ENCODE measurements at regions of chr11 and their contacts with region 1.

Region 1: DNA sequence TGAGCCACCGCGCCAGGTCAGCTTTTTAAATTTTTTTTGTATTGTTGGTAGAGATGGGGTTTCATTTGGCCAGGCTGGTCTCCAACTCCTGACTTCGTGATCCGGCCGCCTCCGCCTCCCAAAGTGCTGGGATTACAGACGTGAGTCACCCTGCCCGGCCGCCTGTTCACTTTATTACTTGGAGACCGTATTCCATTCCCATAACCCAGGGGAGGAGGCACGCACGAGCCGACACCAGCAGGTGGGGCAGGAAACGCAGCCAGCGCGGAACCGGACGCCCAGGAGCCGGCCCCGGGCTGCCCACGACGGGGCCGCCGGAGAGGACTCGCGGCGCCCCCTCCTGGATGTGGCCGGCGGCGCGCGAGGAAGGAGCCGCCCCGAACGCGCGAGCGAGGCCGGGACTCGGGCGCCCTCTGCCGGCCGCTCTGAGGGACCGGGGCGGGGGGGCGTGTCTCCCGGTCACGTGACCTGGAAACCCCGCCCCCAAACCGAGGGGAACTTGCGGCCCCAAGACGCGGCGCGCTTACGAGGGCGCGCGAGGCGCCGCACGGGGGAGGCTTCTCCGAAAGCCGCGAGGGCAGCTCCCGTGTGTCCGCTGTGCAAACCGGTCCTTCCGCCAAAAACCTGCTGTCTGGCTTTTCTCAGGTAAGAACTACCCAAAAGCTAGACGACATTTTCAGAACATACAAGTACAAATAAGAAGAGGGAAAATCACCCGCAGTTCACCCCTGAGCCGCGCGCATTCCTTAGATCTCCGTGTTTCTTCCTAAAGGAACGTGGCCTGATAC is 11.6 kb upstream of the RNH1 start:
- DNase-seq: peak; percentile 88 to 89
- ATAC-seq: peak; percentile 96 to 98 (median 97)
- H3K4me3 ChIP-seq: peak overlapping the region in 8 of 10 donors; percentile 6 to 43 (median 32)
- H3K27ac ChIP-seq: peak overlapping the region in 9 of 10 donors; percentile 64 to 90 (median 79)
- H3K4me1 ChIP-seq: peaks cover 0 to 11% (median 5%) of the 10 kb centered on the region in 9 donors
- H3K27me3 ChIP-seq: no peaks in the 10 kb centered on the region
- CTCF ChIP-seq: peak in 8 of 9 donors; percentile 98 to 100 (median 100)

Region 2: DNA sequence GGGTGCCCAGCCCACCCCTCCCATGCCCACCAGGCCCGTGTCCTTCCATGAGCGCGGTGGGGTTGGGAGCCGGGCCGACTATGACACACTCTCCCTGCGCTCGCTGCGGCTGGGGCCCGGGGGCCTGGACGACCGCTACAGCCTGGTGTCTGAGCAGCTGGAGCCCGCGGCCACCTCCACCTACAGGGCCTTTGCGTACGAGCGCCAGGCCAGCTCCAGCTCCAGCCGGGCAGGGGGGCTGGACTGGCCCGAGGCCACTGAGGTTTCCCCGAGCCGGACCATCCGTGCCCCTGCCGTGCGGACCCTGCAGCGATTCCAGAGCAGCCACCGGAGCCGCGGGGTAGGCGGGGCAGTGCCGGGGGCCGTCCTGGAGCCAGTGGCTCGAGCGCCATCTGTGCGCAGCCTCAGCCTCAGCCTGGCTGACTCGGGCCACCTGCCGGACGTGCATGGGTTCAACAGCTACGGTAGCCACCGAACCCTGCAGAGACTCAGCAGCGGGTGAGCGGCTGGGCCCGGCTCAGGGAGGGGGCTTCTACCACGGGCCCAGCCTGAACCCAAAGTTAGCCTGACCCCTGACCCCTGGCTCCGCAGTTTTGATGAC is 121.6 kb before region 1 on chr11:
- intact Hi-C with region 1: loop called in 2 of 10 experiments (anchors 10 kb)
- DNase-seq: peak; percentile 62 to 66
- ATAC-seq: peak; percentile 71 to 94 (median 89)
- H3K4me3 ChIP-seq: peak overlapping the region in 9 of 10 donors; percentile 29 to 53 (median 46)
- H3K27ac ChIP-seq: peak overlapping the region in 1 of 10 donors; percentile 28
- H3K4me1 ChIP-seq: peaks cover 0 to 17% (median 7%) of the 10 kb centered on the region in 9 donors
- H3K27me3 ChIP-seq: peaks cover 0 to 53% (median 9%) of the 10 kb centered on the region in 7 donors
- CTCF ChIP-seq: peak in 8 of 9 donors; percentile 33 to 68 (median 52)

Region 3: GRCh38 chr11:406978-407739 is 111.5 kb before region 1 on chr11:
- intact Hi-C with region 1: loop called in 4 of 10 experiments (anchors 1 to 10 kb)
- DNase-seq: peak; percentile 82 to 85
- ATAC-seq: peak; percentile 72 to 83 (median 76)
- H3K4me3 ChIP-seq: peak overlapping the region; percentile 56 to 85 (median 70)
- H3K27ac ChIP-seq: peak overlapping the region; percentile 70 to 89 (median 82)
- H3K4me1 ChIP-seq: peaks cover 6 to 24% (median 18%) of the 10 kb centered on the region in 9 donors
- H3K27me3 ChIP-seq: no peaks in the 10 kb centered on the region
- CTCF ChIP-seq: peak in 2 of 9 donors; percentile 1 to 2

Region 4: DNA sequence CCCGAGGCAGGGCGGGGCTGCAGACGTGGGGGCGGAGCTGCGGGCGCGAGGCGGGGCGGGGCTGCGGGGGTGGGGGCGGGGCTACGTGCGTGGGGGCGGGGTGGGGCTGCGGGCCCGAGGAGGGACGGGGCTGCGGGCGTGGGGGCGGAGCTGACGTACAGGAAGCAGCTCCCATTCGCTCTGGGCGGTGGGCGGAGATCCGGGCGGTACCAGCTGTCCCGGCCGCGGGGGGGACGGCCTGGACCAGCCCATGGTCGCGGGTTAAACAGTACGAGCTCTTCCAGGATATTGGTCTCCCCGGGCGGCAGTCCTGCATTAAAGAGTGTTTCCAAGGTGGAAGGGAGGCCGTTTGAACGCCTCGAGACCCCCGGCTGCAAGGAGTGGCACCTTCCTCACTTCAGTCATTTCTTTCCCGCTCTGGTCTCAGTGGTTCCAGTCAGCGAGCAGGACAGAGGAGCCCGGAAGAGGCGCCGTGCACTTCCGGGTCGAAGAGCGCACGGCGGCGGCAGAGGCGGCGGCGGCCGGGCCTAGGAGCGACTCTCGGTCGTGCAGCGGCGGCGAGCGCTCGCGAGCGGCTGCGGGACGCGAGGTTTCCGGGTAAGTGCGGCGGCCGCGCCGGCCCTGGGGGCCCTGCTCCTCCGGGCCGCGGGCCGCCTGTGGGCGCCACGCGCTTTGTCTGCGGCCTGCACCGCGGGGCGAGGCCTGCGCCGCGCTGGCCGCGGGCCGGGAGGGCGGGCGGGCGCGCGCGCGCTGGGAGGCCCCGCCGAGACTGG is 57.5 kb after region 1 on chr11 and contains the start of gene PHRF1:
- intact Hi-C with region 1: loop called in 1 of 10 experiments (anchors 10 kb)
- DNase-seq: peak; percentile 95 to 96
- ATAC-seq: peak; percentile 92 to 98 (median 96)
- H3K4me3 ChIP-seq: peak within 1 kb of the TSS; percentile 67 to 99 (median 88)
- H3K27ac ChIP-seq: peak within 1 kb of the TSS; percentile 84 to 99 (median 94)
- H3K4me1 ChIP-seq: peaks cover 26 to 57% (median 54%) of the 10 kb centered on the region in 9 donors
- H3K27me3 ChIP-seq: peaks cover 0 to 21% (median 0%) of the 10 kb centered on the region in 7 donors
- CTCF ChIP-seq: no peak
- total RNA-seq, gene PHRF1: 14.7 to 23.0 (median 18.5) TPM